ENCODE measurements at regions of chr5 and their contacts with region 1.

Region 1: GRCh38 chr5:34929150-34929719 is at the start of gene DNAJC21:
- DNase-seq: peak; percentile 97 to 99 (median 98)
- ATAC-seq: peak; percentile 95
- H3K4me3 ChIP-seq: peak within 1 kb of the TSS; percentile 84
- H3K27ac ChIP-seq: peak within 1 kb of the TSS; percentile 85
- H3K4me1 ChIP-seq: peaks cover 11 to 23% of the 10 kb centered on the region in 2 experiments
- H3K27me3 ChIP-seq: no peaks in the 10 kb centered on the region
- CTCF ChIP-seq: no peak
- EP300 ChIP-seq: no peak; the same call in 1 of the 2 replicates
- POLR2A ChIP-seq: no peak; the same call in none of the 2 replicates
- RAD21 ChIP-seq: no peak
- polyA plus RNA-seq, gene DNAJC21: 26.6 to 29.7 TPM

Region 2: DNA sequence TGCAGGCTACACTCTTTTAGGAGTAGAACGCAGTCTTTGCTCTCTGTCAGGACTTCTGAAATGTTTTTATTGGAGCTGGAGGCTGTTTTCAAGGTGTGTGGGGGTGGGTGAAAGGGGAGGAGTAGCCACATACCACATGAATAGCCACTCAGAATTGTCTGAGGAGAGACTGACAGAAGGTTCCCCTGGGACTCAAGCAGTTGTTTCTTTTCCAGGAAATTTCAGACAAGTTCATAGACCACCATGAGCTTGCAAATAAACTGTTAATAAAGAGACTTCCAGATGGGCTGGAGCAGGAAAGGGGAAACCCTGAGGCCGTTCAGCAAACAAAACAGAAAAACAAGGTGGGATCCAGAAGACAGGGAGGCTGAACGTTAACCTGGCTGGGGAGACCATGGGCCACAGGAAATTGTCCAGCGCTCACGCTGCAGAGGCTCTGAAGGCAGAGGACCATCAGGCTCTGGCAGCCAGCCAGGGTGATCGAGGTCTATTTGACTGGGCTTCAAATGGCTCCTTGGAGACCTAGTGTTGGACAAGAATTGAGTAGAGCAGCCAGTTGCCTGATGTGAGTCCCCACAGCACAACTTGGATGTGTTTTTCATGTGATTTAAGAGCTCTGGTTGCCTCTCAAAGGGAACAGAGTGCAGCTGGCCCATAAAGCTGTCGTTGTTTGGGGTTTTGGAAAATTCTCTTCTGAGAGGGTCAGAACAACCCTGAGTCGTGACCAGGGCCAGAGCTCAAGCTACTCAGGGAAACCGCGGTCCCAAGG is 432.4 kb before region 1 on chr5:
- CTCF ChIA-PET with region 1: no interaction called
- POLR2A ChIA-PET with region 1: interaction called, 10 read pairs
- in situ Hi-C with region 1: no loop called
- intact Hi-C with region 1: no loop called
- DNase-seq: peak in 1 of 4 experiments; percentile 47
- ATAC-seq: peak; percentile 62
- H3K4me3 ChIP-seq: no peak overlapping the region
- H3K27ac ChIP-seq: no peak overlapping the region
- H3K4me1 ChIP-seq: no peaks in the 10 kb centered on the region; a peak in 2 of 5 replicates
- H3K27me3 ChIP-seq: peaks cover 4 to 33% of the 10 kb centered on the region in 2 experiments; a peak in 4 of 5 replicates
- CTCF ChIP-seq: no peak
- EP300 ChIP-seq: no peak
- POLR2A ChIP-seq: no peak
- RAD21 ChIP-seq: no peak

Region 3: GRCh38 chr5:34941936-34942335 is 12.7 kb after region 1 on chr5:
- CTCF ChIA-PET with region 1: no interaction called
- POLR2A ChIA-PET with region 1: interaction called, 22 read pairs
- in situ Hi-C with region 1: no loop called
- intact Hi-C with region 1: no loop called
- DNase-seq: no peak
- ATAC-seq: no peak
- H3K4me3 ChIP-seq: no peak overlapping the region
- H3K27ac ChIP-seq: no peak overlapping the region
- H3K4me1 ChIP-seq: no peaks in the 10 kb centered on the region
- H3K27me3 ChIP-seq: no peaks in the 10 kb centered on the region
- CTCF ChIP-seq: no peak
- EP300 ChIP-seq: no peak
- POLR2A ChIP-seq: no peak
- RAD21 ChIP-seq: no peak

Region 4: DNA sequence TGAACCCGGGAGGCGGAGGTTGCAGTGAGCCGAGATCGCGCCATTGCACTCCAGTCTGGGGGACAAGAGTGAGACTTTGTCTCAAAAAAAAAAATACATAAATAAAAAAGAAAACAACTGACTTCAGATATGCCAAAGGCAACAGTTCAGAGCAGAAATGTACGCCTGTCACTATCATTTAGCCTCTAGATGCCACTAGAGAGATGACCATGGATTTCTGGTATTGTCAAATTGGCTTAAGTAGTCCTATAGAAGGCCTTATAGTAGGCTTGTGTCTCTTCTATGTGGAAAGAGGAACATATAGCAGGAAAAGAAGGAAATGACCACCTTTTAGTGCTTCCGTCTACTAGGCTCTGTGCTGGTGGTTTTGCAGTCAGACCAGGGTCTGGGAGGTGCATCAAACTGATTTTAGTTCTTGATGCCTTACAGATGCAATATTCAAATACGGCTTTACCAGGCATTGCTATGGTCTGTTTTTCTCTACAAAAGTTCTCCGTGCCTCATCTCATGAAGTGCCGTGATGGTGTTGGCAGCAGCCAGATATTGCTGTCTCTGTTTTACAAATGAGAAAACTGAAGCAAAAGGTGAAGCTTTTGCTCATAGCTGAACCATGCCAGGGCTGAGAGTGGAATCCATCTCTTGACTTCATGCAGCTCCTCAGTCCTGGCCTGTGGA is 101.3 kb after region 1 on chr5:
- CTCF ChIA-PET with region 1: no interaction called
- POLR2A ChIA-PET with region 1: no interaction called
- in situ Hi-C with region 1: no loop called
- intact Hi-C with region 1: no loop called
- DNase-seq: peak in 1 of 4 experiments; percentile 3
- ATAC-seq: peak; percentile 63
- H3K4me3 ChIP-seq: no peak overlapping the region
- H3K27ac ChIP-seq: no peak overlapping the region
- H3K4me1 ChIP-seq: no peaks in the 10 kb centered on the region
- H3K27me3 ChIP-seq: peaks cover 7 to 31% of the 10 kb centered on the region in 2 experiments; a peak in 3 of 5 replicates
- CTCF ChIP-seq: peak in 1 of 3 experiments; percentile 30; a peak in 1 of 6 replicates
- EP300 ChIP-seq: no peak
- POLR2A ChIP-seq: no peak
- RAD21 ChIP-seq: peak in 1 of 2 experiments; percentile 37; a peak in 1 of 4 replicates

Region 5: DNA sequence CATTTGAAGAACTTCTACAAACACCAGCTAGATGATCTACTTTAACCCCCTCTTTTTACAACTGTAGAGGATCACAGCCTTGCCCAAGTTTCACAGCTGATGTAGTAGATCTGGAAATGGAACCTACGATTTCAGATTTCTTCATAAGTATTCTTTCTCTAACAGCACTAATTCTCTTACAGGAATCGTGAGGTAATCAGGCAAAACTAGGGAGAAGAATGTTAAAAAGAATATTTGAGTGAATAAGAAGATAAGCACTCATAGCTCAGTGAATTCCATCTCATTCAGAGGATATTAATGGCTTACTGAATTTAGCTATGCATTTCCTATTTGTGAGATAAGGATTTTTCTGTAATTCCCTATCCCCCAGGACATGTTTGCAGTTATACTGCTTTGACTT is 1270.4 kb after region 1 on chr5:
- CTCF ChIA-PET with region 1: no interaction called
- POLR2A ChIA-PET with region 1: no interaction called
- in situ Hi-C with region 1: no loop called
- intact Hi-C with region 1: no loop called
- DNase-seq: no peak
- ATAC-seq: no peak
- H3K4me3 ChIP-seq: no peak overlapping the region
- H3K27ac ChIP-seq: no peak overlapping the region
- H3K4me1 ChIP-seq: no peaks in the 10 kb centered on the region
- H3K27me3 ChIP-seq: no peaks in the 10 kb centered on the region
- CTCF ChIP-seq: no peak
- EP300 ChIP-seq: no peak
- POLR2A ChIP-seq: no peak
- RAD21 ChIP-seq: no peak

Measured in K562 (cell line).